Naive thymus-derived CD8-positive, alpha-beta T cell (primary cell): ENCODE measurements at regions of chr2 and their contacts with region 1.

Region 1: DNA sequence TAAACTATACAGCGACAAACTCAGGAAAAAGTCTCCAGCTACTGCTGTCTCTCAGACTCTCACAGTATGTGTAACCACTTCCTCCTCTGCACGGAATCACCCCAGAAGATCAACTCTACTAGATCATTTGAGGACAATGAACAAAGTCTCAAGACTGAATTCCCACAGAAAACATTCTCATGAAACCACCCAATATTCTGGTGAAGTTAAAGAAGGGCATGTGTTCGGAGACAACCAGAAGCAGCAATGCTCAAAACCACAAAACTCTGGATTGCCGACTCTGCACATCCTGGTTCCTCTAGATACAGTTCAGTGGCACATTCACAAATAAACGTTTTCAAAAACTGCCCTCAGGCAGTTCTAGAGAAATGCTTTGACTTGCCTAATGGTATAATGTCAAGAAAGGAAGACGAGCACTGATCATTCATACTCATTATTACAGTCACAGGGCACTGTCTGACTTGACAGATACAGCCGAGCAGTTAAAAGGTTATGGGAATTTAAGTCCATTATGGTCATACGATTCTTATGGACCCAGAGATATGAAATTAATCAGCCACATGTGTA is 91.9 kb upstream of the STK17B start:
- DNase-seq: peak in 9 of 10 donors; percentile 29 to 85 (median 61)
- ATAC-seq: peak; percentile 86 to 92
- H3K4me3 Mint-ChIP-seq: peak overlapping the region; percentile 53 to 80 (median 70)
- H3K27ac Mint-ChIP-seq: peak overlapping the region; percentile 89 to 99 (median 96)
- H3K4me1 Mint-ChIP-seq: peaks cover 31 to 88% (median 69%) of the 10 kb centered on the region in 4 donors
- H3K27me3 Mint-ChIP-seq: no peaks in the 10 kb centered on the region

Region 2: GRCh38 chr2:196239622-196240587 is 23.4 kb before region 1 on chr2:
- POLR2A ChIA-PET with region 1: interaction called, 52 read pairs
- DNase-seq: peak; percentile 36 to 92 (median 82)
- ATAC-seq: peak; percentile 79 to 88
- H3K4me3 Mint-ChIP-seq: peak overlapping the region; percentile 60 to 89 (median 76)
- H3K27ac Mint-ChIP-seq: peak overlapping the region; percentile 90 to 99 (median 97)
- H3K4me1 Mint-ChIP-seq: peaks cover 36 to 88% (median 78%) of the 10 kb centered on the region in 4 donors
- H3K27me3 Mint-ChIP-seq: no peaks in the 10 kb centered on the region